Activated CD4-positive, alpha-beta memory T cell treated with anti-CD3 and anti-CD28 coated beads, Interleukin-2, amount 10 ng/mL, durations not matched to agents 7 days and 5 days (primary cell): ENCODE measurements at regions of chr2 and their contacts with region 1.

Region 1: GRCh38 chr2:240513549-240514287 is 44.1 kb downstream of the ANKMY1 start:
- DNase-seq: peak; percentile 88
- H3K4me3 Mint-ChIP-seq: no peak overlapping the region
- H3K27ac Mint-ChIP-seq: peak overlapping the region; percentile 58
- H3K4me1 Mint-ChIP-seq: peaks cover 16% of the 10 kb centered on the region
- H3K27me3 Mint-ChIP-seq: no peaks in the 10 kb centered on the region

Region 2: DNA sequence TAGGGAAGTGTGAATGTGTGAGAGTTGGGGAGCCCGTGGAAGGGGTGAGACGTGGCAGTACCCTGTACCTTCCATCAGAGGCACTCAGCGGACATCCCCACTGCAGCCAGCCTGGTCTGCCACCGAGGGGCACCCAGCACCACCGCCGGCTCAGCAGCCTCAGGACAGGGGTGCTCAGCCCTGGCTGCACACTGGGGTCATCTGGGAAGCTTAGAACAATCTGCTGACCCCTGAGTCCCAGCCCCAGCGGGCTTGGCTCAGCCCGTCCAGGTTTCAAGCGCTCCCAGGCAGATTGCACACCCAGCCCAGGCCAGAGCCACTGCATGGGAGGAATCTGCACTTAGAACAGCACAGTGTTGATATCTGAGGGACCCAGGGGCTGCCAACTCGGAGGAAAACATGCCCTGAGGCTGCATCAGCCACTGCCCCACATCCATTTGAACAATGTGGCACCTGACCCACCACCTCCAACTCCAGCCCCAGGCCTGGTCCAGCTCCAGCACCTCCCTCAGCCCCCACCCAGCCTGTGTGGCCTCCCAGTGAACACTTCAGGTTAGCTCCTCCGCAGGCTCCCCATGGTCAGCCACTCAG is 226.1 kb before region 1 on chr2:
- CTCF ChIA-PET with region 1: no interaction called
- POLR2A ChIA-PET with region 1: no interaction called
- DNase-seq: peak; percentile 12
- H3K4me3 Mint-ChIP-seq: no peak overlapping the region
- H3K27ac Mint-ChIP-seq: no peak overlapping the region
- H3K4me1 Mint-ChIP-seq: no peaks in the 10 kb centered on the region
- H3K27me3 Mint-ChIP-seq: peaks cover 9% of the 10 kb centered on the region

Region 3: DNA sequence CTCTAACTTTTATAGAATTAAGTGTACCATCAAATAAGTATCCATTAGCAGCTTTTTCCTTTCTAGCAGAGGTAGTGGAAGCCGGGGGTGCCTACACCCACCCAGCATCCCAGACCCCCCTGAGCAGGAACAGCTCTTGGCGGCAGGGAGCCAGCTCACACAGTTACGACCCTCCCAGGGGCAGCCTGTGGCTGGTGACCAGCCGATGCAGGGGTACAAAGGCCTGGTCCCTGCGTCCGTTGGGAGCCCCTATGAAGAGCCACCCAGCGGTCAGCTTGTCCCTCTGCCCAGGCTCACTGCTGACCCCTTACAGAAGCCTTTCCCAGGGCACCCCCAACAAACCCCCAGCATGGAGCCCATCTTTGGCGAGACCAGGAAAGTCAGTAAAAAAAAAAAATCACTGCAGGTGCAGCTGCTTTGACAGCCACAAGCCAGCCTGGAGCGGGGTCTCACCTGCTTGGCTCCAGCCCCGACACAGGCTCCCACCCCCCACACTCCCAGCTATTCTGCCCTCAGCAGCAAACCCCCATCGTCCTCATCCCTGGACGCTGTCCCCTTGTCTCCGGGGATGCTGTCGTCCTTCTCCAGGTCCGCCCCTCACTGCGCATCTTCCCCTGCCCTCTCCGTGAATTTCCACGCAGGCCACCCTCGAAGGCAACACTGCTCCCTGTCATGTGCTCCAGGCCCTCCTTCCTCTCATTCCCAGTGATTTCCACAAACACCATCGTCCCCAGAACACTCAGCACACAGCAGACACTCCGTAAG is 35.2 kb before region 1 on chr2:
- CTCF ChIA-PET with region 1: no interaction called
- POLR2A ChIA-PET with region 1: no interaction called
- DNase-seq: no peak
- H3K4me3 Mint-ChIP-seq: no peak overlapping the region
- H3K27ac Mint-ChIP-seq: no peak overlapping the region
- H3K4me1 Mint-ChIP-seq: no peaks in the 10 kb centered on the region
- H3K27me3 Mint-ChIP-seq: no peaks in the 10 kb centered on the region

Region 4: DNA sequence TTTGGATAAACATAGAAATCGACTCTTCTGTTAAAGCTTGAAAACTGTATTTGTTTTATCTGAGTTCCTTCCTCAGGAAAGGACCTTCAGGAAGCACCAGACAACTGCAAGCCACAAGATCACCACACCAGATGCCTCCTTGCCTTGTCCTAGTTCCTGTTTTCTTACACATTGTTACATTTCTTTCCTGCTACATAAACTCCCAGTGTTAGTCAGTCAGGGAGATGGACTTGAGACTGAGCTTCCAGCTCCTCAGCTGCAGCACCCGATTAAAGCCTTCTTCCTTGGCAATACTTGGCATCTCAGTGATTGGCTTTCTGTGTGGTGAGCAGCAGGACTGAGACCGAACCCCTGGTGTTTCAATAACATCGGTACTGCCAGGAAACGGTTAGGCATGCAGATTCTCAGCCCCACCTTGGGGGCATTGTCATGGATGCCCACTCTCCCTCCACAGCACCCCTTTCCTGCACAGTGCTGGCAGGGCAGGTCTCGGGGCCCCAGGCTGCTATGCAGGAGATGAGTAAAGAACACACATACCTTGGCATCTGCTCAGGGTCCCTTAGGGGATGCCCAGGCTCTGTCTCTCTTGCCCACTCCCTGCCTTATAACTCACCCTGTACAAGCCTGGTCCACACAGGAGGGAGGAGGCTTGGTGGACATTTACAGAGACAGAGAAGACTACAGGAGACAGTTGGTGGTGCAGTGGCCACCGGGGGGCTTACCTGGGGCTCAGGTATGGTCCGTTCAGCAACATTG is 11.4 kb after region 1 on chr2:
- CTCF ChIA-PET with region 1: interaction called, 10 read pairs
- POLR2A ChIA-PET with region 1: interaction called, 3 read pairs
- DNase-seq: peak; percentile 6
- H3K4me3 Mint-ChIP-seq: no peak overlapping the region
- H3K27ac Mint-ChIP-seq: no peak overlapping the region
- H3K4me1 Mint-ChIP-seq: no peaks in the 10 kb centered on the region
- H3K27me3 Mint-ChIP-seq: no peaks in the 10 kb centered on the region

Region 5: GRCh38 chr2:240566203-240567136 is 52.8 kb after region 1 on chr2:
- CTCF ChIA-PET with region 1: interaction called, 49 read pairs
- POLR2A ChIA-PET with region 1: interaction called, 17 read pairs
- DNase-seq: peak; percentile 97
- H3K4me3 Mint-ChIP-seq: peak overlapping the region; percentile 94
- H3K27ac Mint-ChIP-seq: peak overlapping the region; percentile 97
- H3K4me1 Mint-ChIP-seq: peaks cover 71% of the 10 kb centered on the region
- H3K27me3 Mint-ChIP-seq: no peaks in the 10 kb centered on the region

Region 6: DNA sequence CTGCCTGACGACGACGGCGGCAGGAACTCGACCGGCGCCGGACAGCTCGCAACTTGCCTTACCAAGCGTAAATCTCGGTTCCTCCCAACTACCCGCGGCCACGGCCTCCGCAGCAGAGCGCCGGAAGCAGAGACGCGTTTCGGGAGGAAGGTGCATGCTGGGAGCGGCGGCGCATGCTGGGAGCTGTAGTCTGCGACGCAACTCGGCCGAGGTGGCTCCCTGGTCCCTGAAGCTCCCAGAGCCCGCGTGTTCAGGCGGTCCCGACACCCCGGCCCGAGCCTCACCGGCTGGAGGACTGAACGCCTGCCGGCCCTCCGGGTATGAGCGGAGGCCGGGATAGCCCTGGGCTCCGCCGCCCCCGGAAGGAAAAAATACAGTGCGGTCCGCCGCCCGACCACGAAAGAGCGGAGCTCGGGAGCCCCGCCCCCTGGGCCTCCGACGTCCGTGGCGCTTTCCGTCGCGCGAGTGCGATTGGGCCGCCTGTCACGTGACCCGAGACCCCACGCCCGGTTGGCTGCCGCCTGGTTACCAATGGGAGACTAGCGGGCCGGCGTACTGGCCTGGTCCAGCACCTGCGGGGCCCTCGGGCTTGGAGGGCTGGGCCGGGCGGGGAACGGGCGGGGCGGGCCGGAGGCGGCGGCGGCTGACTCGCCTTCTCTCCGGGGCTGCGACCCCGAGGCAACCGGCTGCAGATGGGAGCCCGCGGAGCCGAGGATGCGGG is 72.6 kb after region 1 on chr2 and contains the start of gene CAPN10:
- CTCF ChIA-PET with region 1: interaction called, 41 read pairs
- POLR2A ChIA-PET with region 1: interaction called, 5 read pairs
- DNase-seq: peak; percentile 97
- H3K4me3 Mint-ChIP-seq: peak within 1 kb of the TSS; percentile 91
- H3K27ac Mint-ChIP-seq: peak within 1 kb of the TSS; percentile 89
- H3K4me1 Mint-ChIP-seq: peaks cover 54% of the 10 kb centered on the region
- H3K27me3 Mint-ChIP-seq: no peaks in the 10 kb centered on the region
- total RNA-seq, gene CAPN10: 52.3 to 53.1 TPM

Region 7: DNA sequence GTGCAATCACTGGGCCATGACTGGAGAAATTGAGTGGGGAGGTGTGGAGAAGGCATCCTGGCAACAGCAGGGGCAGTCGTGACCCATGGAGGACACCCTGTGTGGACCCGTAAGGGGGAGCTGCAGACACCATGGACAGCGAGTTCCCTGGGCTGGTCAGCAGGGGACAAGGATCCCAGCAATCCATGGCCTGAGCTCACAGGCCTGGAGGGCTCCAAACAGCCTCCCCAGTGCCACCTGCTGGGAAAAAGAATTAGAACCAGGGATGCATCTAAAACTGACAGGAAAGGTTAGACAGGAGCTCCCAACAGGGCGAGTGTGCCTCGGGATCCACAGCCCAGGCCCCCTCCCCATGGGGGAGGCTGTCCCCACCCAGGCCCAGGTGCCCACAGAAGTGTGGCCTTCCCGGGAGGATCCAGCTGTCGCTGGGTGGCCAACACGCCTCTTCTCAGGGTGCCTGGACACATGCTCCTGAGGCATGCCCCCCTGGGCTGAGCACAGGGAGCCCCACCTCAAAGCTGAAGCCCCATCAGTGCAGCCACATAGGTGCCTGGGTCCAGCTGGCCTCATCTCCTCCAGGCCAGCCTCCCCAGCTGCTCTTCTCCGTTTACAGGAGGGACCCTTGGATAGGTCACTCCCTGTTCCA is 326.8 kb after region 1 on chr2:
- CTCF ChIA-PET with region 1: interaction called, 11 read pairs
- POLR2A ChIA-PET with region 1: no interaction called
- DNase-seq: peak; percentile 25
- H3K4me3 Mint-ChIP-seq: no peak overlapping the region
- H3K27ac Mint-ChIP-seq: no peak overlapping the region
- H3K4me1 Mint-ChIP-seq: no peaks in the 10 kb centered on the region
- H3K27me3 Mint-ChIP-seq: peaks cover 15% of the 10 kb centered on the region